ENCODE measurements at regions of chr14 and their contacts with region 1.

Region 1: DNA sequence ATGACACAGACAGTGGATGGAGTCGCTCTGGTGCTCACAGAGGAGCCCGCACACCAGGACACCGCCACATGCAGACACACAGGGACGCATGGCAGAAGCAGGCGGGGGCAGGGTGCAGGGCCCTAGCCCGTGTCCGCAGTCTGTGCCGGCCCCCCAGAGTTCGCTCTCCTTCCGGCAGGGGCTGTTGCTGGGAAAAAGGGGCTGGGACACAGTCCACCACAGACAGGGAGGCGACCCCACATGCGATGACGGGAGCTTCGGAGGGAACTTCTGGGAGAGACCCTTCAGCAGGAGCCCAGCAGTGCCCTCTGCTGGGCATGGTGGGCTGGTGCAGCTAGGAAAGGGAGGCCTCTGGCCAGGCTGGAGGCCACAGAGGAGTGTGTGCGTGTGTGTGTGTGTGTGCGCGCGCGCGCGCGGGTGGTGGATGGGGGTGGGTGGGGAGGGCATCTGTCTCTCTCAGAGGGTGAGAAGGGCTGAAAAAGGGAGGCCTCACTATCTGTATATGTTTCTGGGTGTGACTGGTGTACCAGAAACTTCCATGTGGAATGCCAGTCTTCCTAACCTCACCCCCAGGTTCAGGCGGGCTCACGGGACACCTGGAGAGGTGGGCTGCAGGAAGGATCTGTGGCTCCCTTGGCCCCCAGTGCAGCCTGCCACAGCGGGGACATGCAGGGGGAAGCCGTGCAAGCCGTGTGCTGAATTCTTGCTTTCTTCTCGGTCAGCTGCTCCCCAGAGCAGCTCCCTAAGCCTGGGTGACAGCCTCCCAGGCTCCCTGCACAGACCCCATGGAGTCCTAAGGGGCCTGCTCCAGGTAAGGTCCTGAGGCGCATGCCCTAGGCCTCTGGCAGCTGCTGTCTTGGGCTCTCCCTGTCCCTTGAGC is 60.7 kb downstream of the PLEKHG3 start:
- DNase-seq: peak; percentile 74
- ATAC-seq: peak; percentile 79
- H3K4me3 Mint-ChIP-seq: peak overlapping the region; percentile 10
- H3K27ac Mint-ChIP-seq: no peak overlapping the region
- H3K4me1 Mint-ChIP-seq: peaks cover 18% of the 10 kb centered on the region
- H3K27me3 Mint-ChIP-seq: peaks cover 22% of the 10 kb centered on the region

Region 2: DNA sequence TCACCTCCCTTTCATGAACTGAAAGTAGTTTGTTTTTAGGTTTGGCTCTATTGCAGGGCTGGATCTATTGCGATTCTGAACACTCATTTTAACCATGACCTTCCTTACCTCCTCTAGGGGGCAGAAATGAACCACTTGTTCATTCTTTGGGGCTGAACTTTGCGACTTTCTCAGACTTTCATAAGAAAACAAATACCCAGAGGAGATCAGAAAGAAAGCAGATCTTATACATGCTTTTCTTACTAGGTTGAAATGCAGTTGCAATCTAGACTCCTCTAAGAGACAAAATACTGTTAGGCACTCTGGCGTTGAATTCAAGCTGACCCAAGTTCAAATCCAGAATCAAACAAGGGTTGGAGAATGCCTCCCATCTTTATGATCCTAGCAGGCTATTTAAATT is 93.3 kb before region 1 on chr14:
- CTCF ChIA-PET with region 1: interaction called, 64 read pairs
- POLR2A ChIA-PET with region 1: no interaction called
- DNase-seq: peak; percentile 44
- ATAC-seq: peak; percentile 67
- H3K4me3 Mint-ChIP-seq: no peak overlapping the region
- H3K27ac Mint-ChIP-seq: no peak overlapping the region
- H3K4me1 Mint-ChIP-seq: peaks cover 38% of the 10 kb centered on the region
- H3K27me3 Mint-ChIP-seq: peaks cover 25% of the 10 kb centered on the region

Region 3: DNA sequence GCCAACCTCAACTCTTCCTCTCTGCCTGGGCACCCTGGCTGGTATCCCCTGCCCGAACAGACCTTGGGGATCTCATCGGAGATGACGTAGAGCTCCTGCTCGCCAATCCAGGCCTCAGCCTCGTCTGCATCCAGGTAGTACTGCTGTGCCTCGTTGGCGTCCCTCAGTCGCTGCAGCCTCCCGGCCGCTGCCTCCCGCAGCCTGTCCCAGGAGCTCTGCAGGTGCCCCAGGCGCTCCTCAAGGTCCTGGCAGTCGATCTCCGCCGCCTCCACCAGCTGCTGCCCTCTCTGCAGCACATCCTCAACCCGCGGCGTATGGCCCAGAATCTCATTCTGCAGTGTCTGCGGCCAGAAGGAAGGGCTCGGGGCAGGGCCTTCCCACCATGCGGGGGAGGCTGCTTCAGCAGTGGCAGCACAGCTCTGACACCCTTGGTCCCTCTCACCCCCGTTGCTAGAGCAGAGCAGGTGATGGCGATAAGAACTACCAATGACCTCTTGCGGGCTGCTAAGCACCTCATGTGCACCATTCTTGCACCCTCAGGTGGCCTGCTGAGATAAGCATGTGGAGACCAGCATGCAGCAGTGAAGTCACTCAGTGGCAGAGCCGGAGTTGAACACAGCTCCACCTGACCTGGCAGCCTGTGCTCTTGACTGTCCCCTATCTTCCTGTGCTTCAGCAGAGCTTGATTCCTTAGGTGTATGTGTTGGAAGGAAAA is 10.3 kb after region 1 on chr14:
- CTCF ChIA-PET with region 1: interaction called, 11 read pairs
- POLR2A ChIA-PET with region 1: no interaction called
- DNase-seq: no peak
- ATAC-seq: no peak
- H3K4me3 Mint-ChIP-seq: no peak overlapping the region
- H3K27ac Mint-ChIP-seq: no peak overlapping the region
- H3K4me1 Mint-ChIP-seq: peaks cover 9% of the 10 kb centered on the region
- H3K27me3 Mint-ChIP-seq: no peaks in the 10 kb centered on the region

Region 4: GRCh38 chr14:64899958-64900357 is 135.1 kb after region 1 on chr14:
- CTCF ChIA-PET with region 1: no interaction called
- POLR2A ChIA-PET with region 1: no interaction called
- DNase-seq: no peak
- ATAC-seq: no peak
- H3K4me3 Mint-ChIP-seq: no peak overlapping the region
- H3K27ac Mint-ChIP-seq: no peak overlapping the region
- H3K4me1 Mint-ChIP-seq: no peaks in the 10 kb centered on the region
- H3K27me3 Mint-ChIP-seq: peaks cover 32% of the 10 kb centered on the region